ENCODE measurements at regions of chr18 and their contacts with region 1.

Region 1: GRCh38 chr18:49031511-49032188 is 80.9 kb upstream of the SMAD7 start:
- DNase-seq: peak in 1 of 2 donors; percentile 15
- H3K4me3 ChIP-seq: no peak overlapping the region
- H3K27ac ChIP-seq: no peak overlapping the region
- H3K4me1 ChIP-seq: no peaks in the 10 kb centered on the region
- H3K27me3 ChIP-seq: no peaks in the 10 kb centered on the region
- CTCF ChIP-seq: no peak
- POLR2A ChIP-seq: no peak

Region 2: GRCh38 chr18:48767090-48767690 is 264.5 kb before region 1 on chr18:
- intact Hi-C with region 1: no loop called
- DNase-seq: no peak
- H3K4me3 ChIP-seq: no peak overlapping the region
- H3K27ac ChIP-seq: no peak overlapping the region
- H3K4me1 ChIP-seq: no peaks in the 10 kb centered on the region
- H3K27me3 ChIP-seq: no peaks in the 10 kb centered on the region
- CTCF ChIP-seq: no peak
- POLR2A ChIP-seq: no peak

Region 3: GRCh38 chr18:48975649-48976204 is 55.9 kb before region 1 on chr18:
- intact Hi-C with region 1: loop called (anchors 2 kb)
- DNase-seq: peak in 1 of 2 donors; percentile 83
- H3K4me3 ChIP-seq: peak overlapping the region; percentile 54 to 97 (median 75)
- H3K27ac ChIP-seq: peak overlapping the region; percentile 88 to 91
- H3K4me1 ChIP-seq: no peaks in the 10 kb centered on the region
- H3K27me3 ChIP-seq: no peaks in the 10 kb centered on the region
- CTCF ChIP-seq: no peak
- POLR2A ChIP-seq: no peak

Region 4: DNA sequence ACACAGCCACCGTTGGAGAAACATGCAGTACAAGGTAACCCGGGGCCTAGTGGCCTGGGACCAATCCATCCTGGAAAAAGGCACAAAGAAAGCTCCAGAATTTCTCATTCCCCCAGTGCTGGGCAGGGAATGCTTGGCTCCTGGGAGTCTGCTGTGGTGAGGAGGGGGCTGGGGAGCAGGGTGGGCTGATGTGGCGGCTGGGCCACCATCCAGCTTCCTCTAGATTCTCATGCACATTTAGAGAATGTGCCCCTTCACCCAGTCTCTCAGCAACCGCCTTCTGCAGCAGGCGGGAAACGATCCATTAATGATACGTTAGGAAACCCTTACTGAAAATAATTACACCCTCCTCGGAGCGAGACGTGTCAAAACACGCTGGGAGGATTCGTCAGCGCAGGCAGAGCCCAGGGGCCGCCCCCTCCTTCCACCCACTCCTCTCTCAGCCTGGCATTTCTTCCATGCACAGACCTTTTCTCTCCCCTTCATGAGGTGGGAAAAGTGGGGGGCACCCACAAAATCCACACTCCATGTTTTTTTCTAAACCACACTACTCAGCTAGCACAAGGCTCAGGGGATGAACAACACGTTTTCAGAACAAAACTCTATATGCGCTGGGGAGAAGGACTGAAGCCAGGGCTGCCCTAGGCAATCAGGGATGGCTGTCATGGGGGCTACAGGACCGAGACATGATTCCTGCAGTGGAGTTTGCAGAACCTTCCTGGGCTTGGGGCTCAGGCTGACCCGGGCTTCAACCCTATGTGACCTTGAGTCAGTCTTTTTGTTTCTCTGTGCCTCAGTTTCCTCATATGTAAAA is 24.8 kb before region 1 on chr18:
- intact Hi-C with region 1: no loop called
- DNase-seq: peak in 1 of 2 donors; percentile 43
- H3K4me3 ChIP-seq: no peak overlapping the region
- H3K27ac ChIP-seq: no peak overlapping the region
- H3K4me1 ChIP-seq: no peaks in the 10 kb centered on the region
- H3K27me3 ChIP-seq: no peaks in the 10 kb centered on the region
- CTCF ChIP-seq: no peak
- POLR2A ChIP-seq: no peak